ENCODE measurements at regions of chr13 and their contacts with region 1.

Region 1: DNA sequence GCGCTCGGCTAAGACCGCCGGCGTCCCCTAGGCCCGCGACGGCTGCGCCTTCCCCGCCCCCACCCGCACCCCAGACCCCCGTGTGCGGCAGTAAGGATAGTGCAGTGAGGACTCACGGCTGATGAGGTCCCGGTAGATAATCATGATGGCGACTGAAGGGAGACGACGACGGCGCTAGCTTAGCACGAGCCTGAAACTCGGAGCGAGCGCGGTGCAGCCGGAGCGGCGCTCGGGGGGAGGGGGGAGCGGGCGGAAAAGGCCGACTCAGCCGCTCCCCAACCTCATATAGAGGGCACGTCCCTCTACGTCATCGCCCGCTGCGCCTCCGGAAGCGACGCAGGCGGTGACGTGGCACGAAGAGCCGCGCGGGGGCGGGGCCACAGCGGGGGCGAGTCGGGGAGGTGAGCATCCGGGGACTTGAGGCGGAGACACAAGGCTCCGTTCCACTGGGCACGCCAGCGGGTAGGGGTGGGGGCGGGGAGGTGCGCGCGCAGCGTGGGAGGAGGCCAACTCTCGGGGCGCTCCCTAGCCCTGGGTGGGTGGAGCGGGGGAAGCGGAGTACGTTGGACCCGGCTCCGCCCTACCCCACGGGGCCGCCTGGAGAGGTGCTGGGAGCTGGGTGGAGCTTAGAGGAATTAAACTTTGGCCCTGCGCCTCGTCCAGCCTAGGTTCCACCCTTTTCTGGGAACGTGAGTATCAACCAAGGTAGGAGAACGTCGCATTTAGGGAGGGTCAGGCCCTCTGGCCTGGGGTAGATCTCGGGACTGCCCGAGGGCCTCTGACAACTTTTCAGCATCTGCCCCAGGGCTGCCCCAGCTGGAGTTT is at the start of gene TPT1:
- DNase-seq: peak; percentile 100
- ATAC-seq: peak; percentile 89
- H3K4me3 ChIP-seq: peak within 1 kb of the TSS; percentile 78 to 99 (median 95)
- H3K4me3 Mint-ChIP-seq: peak within 1 kb of the TSS; percentile 99
- H3K27ac ChIP-seq: peak within 1 kb of the TSS; percentile 93 to 97
- H3K27ac Mint-ChIP-seq: peak within 1 kb of the TSS; percentile 100
- H3K4me1 ChIP-seq: peaks cover 31 to 35% of the 10 kb centered on the region in 2 donors
- H3K4me1 Mint-ChIP-seq: peaks cover 51% of the 10 kb centered on the region
- H3K27me3 ChIP-seq: no peaks in the 10 kb centered on the region
- H3K27me3 Mint-ChIP-seq: no peaks in the 10 kb centered on the region
- CTCF ChIP-seq: no peak
- total RNA-seq, gene TPT1: 4,599 and 4,871 TPM in 2 replicates

Region 2: GRCh38 chr13:44988973-44989817 is 351.9 kb before region 1 on chr13 and contains the starts of genes GPALPP1 and NUFIP1:
- CTCF ChIA-PET with region 1: no interaction called
- POLR2A ChIA-PET with region 1: no interaction called
- intact Hi-C with region 1: loop called (anchors 1 kb)
- DNase-seq: peak; percentile 93
- ATAC-seq: peak; percentile 97
- H3K4me3 ChIP-seq: peak within 1 kb of the TSS; percentile 92 to 99 (median 98)
- H3K4me3 Mint-ChIP-seq: peak within 1 kb of the TSS; percentile 100
- H3K27ac ChIP-seq: peak within 1 kb of the TSS; percentile 79 to 89
- H3K27ac Mint-ChIP-seq: peak within 1 kb of the TSS; percentile 98
- H3K4me1 ChIP-seq: peaks cover 13 to 24% of the 10 kb centered on the region in 2 donors
- H3K4me1 Mint-ChIP-seq: peaks cover 43% of the 10 kb centered on the region
- H3K27me3 ChIP-seq: no peaks in the 10 kb centered on the region
- H3K27me3 Mint-ChIP-seq: no peaks in the 10 kb centered on the region
- CTCF ChIP-seq: no peak
- total RNA-seq, gene GPALPP1: 41.8 and 45.6 TPM in 2 replicates
- total RNA-seq, gene NUFIP1: 4.7 and 5.8 TPM in 2 replicates

Region 3: DNA sequence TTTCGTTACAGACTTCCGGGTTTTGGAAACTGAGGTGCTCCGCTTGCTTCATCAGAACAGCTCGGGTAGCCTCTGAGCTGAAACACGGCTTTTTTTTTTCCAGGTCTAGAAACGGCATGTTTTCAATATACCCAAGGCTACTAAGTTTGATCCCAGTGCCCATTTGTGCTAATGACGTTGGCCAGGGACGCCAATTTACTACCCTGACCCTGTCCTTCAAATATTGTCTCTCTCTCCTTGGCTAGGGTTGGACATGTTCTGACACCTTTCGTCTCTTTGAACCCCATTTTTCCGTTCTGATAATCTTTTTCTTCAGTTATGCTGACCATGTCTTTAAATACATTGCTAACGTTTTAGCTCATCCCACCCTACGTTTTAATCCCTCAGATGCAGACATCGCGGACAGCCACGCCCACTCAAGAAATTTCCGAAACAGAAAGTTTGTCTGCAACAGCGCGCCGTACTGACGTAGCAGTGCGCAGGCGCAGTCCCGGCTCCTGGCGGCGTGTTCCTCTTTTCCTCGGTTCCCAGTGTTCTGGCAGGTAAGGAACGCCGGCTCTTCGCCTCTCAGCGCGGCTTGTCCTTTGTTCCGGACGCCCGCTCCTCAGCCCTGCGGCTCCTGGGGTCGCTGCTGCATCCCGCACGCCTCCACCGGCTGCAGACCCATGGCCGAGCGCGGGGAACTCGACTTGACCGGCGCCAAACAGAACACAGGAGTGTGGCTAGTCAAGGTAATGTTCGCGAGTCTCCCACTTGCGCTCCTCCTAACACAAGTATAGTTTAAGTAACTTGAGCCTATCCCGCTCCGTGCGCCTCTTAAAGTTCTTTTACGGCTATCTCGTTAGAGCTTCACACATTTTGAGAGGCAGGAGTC is 220.9 kb before region 1 on chr13 and contains the start of gene GTF2F2:
- CTCF ChIA-PET with region 1: no interaction called
- POLR2A ChIA-PET with region 1: no interaction called
- intact Hi-C with region 1: loop called (anchors 1 kb)
- DNase-seq: peak; percentile 94
- ATAC-seq: peak; percentile 81
- H3K4me3 ChIP-seq: peak within 1 kb of the TSS; percentile 68 to 100 (median 92)
- H3K4me3 Mint-ChIP-seq: no peak within 1 kb of the TSS
- H3K27ac ChIP-seq: peak within 1 kb of the TSS; percentile 66 to 93
- H3K27ac Mint-ChIP-seq: no peak within 1 kb of the TSS
- H3K4me1 ChIP-seq: peaks cover 20 to 21% of the 10 kb centered on the region in 2 donors
- H3K4me1 Mint-ChIP-seq: peaks cover 7% of the 10 kb centered on the region
- H3K27me3 ChIP-seq: no peaks in the 10 kb centered on the region
- H3K27me3 Mint-ChIP-seq: no peaks in the 10 kb centered on the region
- CTCF ChIP-seq: no peak
- total RNA-seq, gene GTF2F2: 19.6 and 23.6 TPM in 2 replicates

Region 4: DNA sequence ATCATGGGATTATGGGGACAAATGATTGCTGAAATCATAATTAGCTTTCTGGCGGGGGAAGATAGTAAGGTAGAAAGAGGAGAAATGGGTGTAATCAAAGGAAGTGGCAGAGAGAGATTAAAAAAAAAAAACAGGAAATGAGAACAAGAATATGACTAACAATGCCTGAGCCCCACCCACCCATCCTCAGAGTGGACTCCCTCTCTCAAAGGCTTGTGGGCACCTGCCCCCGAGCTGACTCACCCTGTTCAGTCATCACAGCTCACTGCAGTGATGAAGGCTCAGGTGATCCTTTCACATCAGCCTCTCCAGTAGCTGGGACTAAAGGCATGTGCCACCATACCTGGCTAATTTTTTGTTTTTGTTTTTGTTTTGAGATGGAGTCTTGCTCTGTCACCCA is 26.2 kb after region 1 on chr13:
- CTCF ChIA-PET with region 1: interaction called, 22 read pairs
- POLR2A ChIA-PET with region 1: interaction called, 4 read pairs
- intact Hi-C with region 1: loop called (anchors 1 kb)
- DNase-seq: peak; percentile 81
- ATAC-seq: peak; percentile 99
- H3K4me3 ChIP-seq: peak overlapping the region in 1 of 5 experiments; percentile 1
- H3K4me3 Mint-ChIP-seq: peak overlapping the region; percentile 59
- H3K27ac ChIP-seq: peak overlapping the region in 1 of 2 donors; percentile 39
- H3K27ac Mint-ChIP-seq: peak overlapping the region; percentile 83
- H3K4me1 ChIP-seq: peaks cover 13 to 24% of the 10 kb centered on the region in 2 donors
- H3K4me1 Mint-ChIP-seq: peaks cover 32% of the 10 kb centered on the region
- H3K27me3 ChIP-seq: no peaks in the 10 kb centered on the region
- H3K27me3 Mint-ChIP-seq: no peaks in the 10 kb centered on the region
- CTCF ChIP-seq: no peak

Region 5: DNA sequence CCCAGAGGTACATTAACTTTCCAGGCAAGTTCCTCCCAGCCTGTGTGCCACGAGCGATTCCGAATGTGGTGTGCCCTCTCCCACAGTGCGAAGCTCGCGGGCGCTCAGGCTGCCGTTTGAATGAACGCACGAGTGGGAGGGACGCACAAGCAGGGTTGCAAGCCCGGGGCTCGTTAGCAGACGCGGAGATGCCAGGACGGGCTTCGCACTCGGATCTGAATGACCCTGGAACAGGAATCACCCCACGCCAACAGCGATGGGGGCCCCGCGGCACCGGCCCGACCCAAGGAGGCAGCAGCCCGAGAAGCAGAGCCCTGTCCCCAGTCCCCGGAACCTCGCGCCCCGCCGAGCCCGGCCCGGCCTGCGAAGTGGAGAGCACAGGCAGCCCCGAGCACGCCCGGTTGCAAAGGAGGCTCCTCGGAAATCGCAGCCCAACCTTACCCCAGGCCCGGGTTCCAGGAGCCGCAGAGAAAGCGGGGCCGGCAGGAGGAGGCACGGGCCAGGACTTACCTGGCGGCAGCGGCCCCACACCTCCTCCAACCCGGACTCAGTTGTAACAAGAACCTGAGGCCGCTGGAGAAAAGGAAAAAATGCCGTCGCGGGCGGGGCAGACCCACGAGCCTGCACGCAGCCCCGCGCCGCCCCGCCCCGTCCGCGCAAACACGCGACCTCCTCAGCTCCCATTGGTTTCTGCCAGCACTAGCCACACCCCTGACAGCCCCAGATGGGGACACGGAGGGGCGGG is 76.8 kb after region 1 on chr13 and contains the start of gene SLC25A30:
- CTCF ChIA-PET with region 1: no interaction called
- POLR2A ChIA-PET with region 1: interaction called, 5 read pairs
- intact Hi-C with region 1: loop called (anchors 1 kb)
- DNase-seq: peak; percentile 92
- ATAC-seq: peak; percentile 95
- H3K4me3 ChIP-seq: peak within 1 kb of the TSS; percentile 68 to 91 (median 90)
- H3K4me3 Mint-ChIP-seq: peak within 1 kb of the TSS; percentile 97
- H3K27ac ChIP-seq: peak within 1 kb of the TSS; percentile 70 to 87
- H3K27ac Mint-ChIP-seq: peak within 1 kb of the TSS; percentile 96
- H3K4me1 ChIP-seq: peaks cover 9 to 11% of the 10 kb centered on the region in 2 donors
- H3K4me1 Mint-ChIP-seq: peaks cover 21% of the 10 kb centered on the region
- H3K27me3 ChIP-seq: no peaks in the 10 kb centered on the region
- H3K27me3 Mint-ChIP-seq: no peaks in the 10 kb centered on the region
- CTCF ChIP-seq: no peak
- total RNA-seq, gene SLC25A30: 16.9 and 25.8 TPM in 2 replicates

Region 6: GRCh38 chr13:46345398-46345797 is 1004.3 kb after region 1 on chr13:
- CTCF ChIA-PET with region 1: no interaction called
- POLR2A ChIA-PET with region 1: no interaction called
- intact Hi-C with region 1: no loop called
- DNase-seq: no peak
- ATAC-seq: no peak
- H3K4me3 ChIP-seq: no peak overlapping the region
- H3K4me3 Mint-ChIP-seq: no peak overlapping the region
- H3K27ac ChIP-seq: peak overlapping the region in 1 of 2 donors; percentile 80
- H3K27ac Mint-ChIP-seq: no peak overlapping the region
- H3K4me1 ChIP-seq: peaks cover 18 to 21% of the 10 kb centered on the region in 2 donors
- H3K4me1 Mint-ChIP-seq: peaks cover 40% of the 10 kb centered on the region
- H3K27me3 ChIP-seq: no peaks in the 10 kb centered on the region
- H3K27me3 Mint-ChIP-seq: no peaks in the 10 kb centered on the region
- CTCF ChIP-seq: no peak

Measured in B cell (primary cell).